CD4-positive, alpha-beta T cell (primary cell): ENCODE measurements at regions of chr4 and their contacts with region 1.

Region 1: DNA sequence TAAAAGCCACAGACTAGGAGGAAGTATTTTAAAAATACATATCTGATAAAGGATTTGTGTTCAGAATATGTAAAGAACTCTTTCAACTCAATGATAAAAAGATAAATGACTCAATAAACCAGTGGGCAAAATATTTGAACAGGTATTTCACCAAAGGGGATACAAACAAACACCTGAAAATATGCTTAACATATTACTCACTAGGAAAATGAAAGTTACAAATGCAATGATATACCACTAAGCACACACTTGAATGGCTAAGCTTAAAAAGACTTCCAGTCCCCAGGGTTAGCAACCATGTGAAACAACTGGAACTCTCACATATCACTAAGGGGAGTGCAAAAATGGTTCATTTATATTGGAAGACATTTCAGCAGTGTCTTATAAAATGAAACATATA is 131.6 kb downstream of the SLIT2 start:
- DNase-seq: no peak
- ATAC-seq: no peak
- H3K4me3 ChIP-seq: no peak overlapping the region
- H3K4me3 Mint-ChIP-seq: no peak overlapping the region
- H3K27ac ChIP-seq: no peak overlapping the region
- H3K27ac Mint-ChIP-seq: no peak overlapping the region
- H3K4me1 ChIP-seq: no peaks in the 10 kb centered on the region
- H3K4me1 Mint-ChIP-seq: no peaks in the 10 kb centered on the region
- H3K27me3 ChIP-seq: no peaks in the 10 kb centered on the region
- H3K27me3 Mint-ChIP-seq: no peaks in the 10 kb centered on the region
- CTCF ChIP-seq: no peak

Region 2: GRCh38 chr4:18733961-18734360 is 1649.3 kb before region 1 on chr4:
- CTCF ChIA-PET with region 1: no interaction called
- POLR2A ChIA-PET with region 1: no interaction called
- intact Hi-C with region 1: loop called in 1 of 2 experiments (anchors 5 kb)
- DNase-seq: no peak
- ATAC-seq: no peak
- H3K4me3 ChIP-seq: no peak overlapping the region
- H3K4me3 Mint-ChIP-seq: no peak overlapping the region
- H3K27ac ChIP-seq: no peak overlapping the region
- H3K27ac Mint-ChIP-seq: no peak overlapping the region
- H3K4me1 ChIP-seq: no peaks in the 10 kb centered on the region
- H3K4me1 Mint-ChIP-seq: no peaks in the 10 kb centered on the region
- H3K27me3 ChIP-seq: no peaks in the 10 kb centered on the region
- H3K27me3 Mint-ChIP-seq: no peaks in the 10 kb centered on the region
- CTCF ChIP-seq: no peak

Region 3: DNA sequence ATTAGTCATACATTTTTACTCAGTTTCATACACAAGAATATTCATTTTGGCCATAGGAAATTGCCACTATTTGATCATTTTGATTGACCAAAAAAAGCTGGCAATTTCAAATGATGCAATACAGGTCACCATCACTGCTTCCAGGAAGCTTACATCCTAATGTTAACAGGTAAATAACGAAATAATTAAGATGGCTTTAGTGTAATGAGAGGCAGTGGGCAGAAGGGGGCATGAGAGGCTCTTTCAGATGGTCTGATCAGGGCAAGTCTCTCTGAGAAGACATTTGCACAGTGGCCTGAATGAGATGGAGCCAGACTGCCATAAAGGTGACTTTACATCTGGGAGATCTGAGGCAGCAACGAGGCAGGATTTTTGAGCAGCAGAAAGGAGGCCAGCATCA is 39.1 kb after region 1 on chr4:
- CTCF ChIA-PET with region 1: no interaction called
- POLR2A ChIA-PET with region 1: no interaction called
- intact Hi-C with region 1: no loop called
- DNase-seq: peak in 8 of 14 experiments; percentile 1 to 56 (median 8)
- ATAC-seq: peak; percentile 37
- H3K4me3 ChIP-seq: no peak overlapping the region
- H3K4me3 Mint-ChIP-seq: no peak overlapping the region
- H3K27ac ChIP-seq: no peak overlapping the region
- H3K27ac Mint-ChIP-seq: no peak overlapping the region
- H3K4me1 ChIP-seq: no peaks in the 10 kb centered on the region
- H3K4me1 Mint-ChIP-seq: peaks cover 6% of the 10 kb centered on the region
- H3K27me3 ChIP-seq: no peaks in the 10 kb centered on the region
- H3K27me3 Mint-ChIP-seq: no peaks in the 10 kb centered on the region
- CTCF ChIP-seq: peak; percentile 24